Posterior vena cava (tissue), 2 donors: ENCODE measurements at regions of chr5 and their contacts with region 1.

Region 1: GRCh38 chr5:66713998-66714397 is 117.8 kb downstream of the MAST4 start:
- DNase-seq: no peak

Region 2: GRCh38 chr5:66440202-66440680 is 273.8 kb before region 1 on chr5:
- intact Hi-C with region 1: no loop called
- DNase-seq: no peak

Region 3: GRCh38 chr5:66694036-66694435 is 20.0 kb before region 1 on chr5:
- intact Hi-C with region 1: loop called in 1 of 2 experiments (anchors 1 kb)
- DNase-seq: no peak